ENCODE measurements at regions of chr9 and their contacts with region 1.

Region 1: GRCh38 chr9:137034863-137035761 is 3.2 kb upstream of the FUT7 start:
- DNase-seq: peak; percentile 95
- ATAC-seq: peak; percentile 89
- H3K4me3 Mint-ChIP-seq: peak overlapping the region; percentile 62
- H3K27ac Mint-ChIP-seq: peak overlapping the region; percentile 93
- H3K4me1 Mint-ChIP-seq: peaks cover 38% of the 10 kb centered on the region
- H3K27me3 Mint-ChIP-seq: no peaks in the 10 kb centered on the region

Region 2: GRCh38 chr9:136885950-136886578 is 149.0 kb before region 1 on chr9 and contains the start of gene TRAF2:
- CTCF ChIA-PET with region 1: interaction called, 12 read pairs
- DNase-seq: peak; percentile 98
- ATAC-seq: peak; percentile 91
- H3K4me3 Mint-ChIP-seq: peak within 1 kb of the TSS; percentile 96
- H3K27ac Mint-ChIP-seq: peak within 1 kb of the TSS; percentile 88
- H3K4me1 Mint-ChIP-seq: peaks cover 62% of the 10 kb centered on the region
- H3K27me3 Mint-ChIP-seq: no peaks in the 10 kb centered on the region
- total RNA-seq, gene TRAF2: 58.4 to 67.6 TPM

Region 3: GRCh38 chr9:136965771-136966484 is 69.2 kb before region 1 on chr9:
- CTCF ChIA-PET with region 1: interaction called, 16 read pairs
- DNase-seq: peak; percentile 81
- ATAC-seq: peak; percentile 72
- H3K4me3 Mint-ChIP-seq: peak overlapping the region; percentile 58
- H3K27ac Mint-ChIP-seq: peak overlapping the region; percentile 86
- H3K4me1 Mint-ChIP-seq: peaks cover 36% of the 10 kb centered on the region
- H3K27me3 Mint-ChIP-seq: no peaks in the 10 kb centered on the region

Region 4: DNA sequence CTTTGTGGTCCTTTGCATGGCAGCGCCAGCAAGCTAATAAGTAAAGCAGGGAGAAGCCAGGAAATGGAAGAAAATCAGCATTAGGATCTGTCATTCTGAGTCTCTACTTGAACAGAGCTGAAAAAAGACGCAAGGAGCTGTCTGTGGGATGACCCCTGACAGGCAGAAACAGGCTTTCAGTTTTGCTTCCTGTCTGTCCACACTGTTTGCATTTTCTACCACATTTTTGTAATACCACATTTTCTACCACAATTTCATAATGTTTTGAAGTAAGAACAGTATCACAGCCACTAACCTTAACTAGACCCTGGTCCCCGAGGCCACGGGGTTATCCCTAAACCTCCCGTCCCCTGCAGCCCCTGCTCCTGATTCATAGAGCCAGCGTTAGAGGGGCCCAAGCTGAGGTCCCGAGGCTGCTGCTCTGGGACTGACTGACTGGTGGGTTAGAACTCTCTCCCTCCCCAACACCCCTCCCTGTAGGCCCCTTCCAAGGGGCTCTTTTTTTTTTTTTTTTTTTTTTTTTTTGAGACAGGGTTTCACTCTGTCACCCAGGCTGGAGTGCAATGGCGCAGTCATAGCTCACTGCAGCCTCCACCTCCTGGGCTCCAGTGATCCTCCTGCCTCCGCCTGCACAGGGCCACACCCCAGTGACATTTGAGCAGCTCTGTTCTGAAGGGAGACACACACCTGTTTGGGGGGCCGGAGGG is 34.8 kb before region 1 on chr9:
- CTCF ChIA-PET with region 1: interaction called, 234 read pairs
- DNase-seq: peak; percentile 74
- ATAC-seq: peak; percentile 66
- H3K4me3 Mint-ChIP-seq: peak overlapping the region; percentile 59
- H3K27ac Mint-ChIP-seq: peak overlapping the region; percentile 86
- H3K4me1 Mint-ChIP-seq: peaks cover 60% of the 10 kb centered on the region
- H3K27me3 Mint-ChIP-seq: peaks cover 5% of the 10 kb centered on the region

Region 5: GRCh38 chr9:137070201-137070905 is 35.2 kb after region 1 on chr9 and contains the start of gene SAPCD2:
- CTCF ChIA-PET with region 1: interaction called, 98 read pairs
- DNase-seq: peak; percentile 93
- ATAC-seq: peak; percentile 91
- H3K4me3 Mint-ChIP-seq: peak within 1 kb of the TSS; percentile 78
- H3K27ac Mint-ChIP-seq: peak within 1 kb of the TSS; percentile 83
- H3K4me1 Mint-ChIP-seq: peaks cover 27% of the 10 kb centered on the region
- H3K27me3 Mint-ChIP-seq: no peaks in the 10 kb centered on the region
- total RNA-seq, gene SAPCD2: 31.9 to 40.1 TPM

Measured in activated CD8-positive, alpha-beta memory T cell treated with anti-CD3 and anti-CD28 coated beads, Interleukin-2, amount 10 ng/mL, durations not matched to agents 7 days and 5 days (primary cell).